IMR-90 (cell line): ENCODE measurements at regions of chr16 and their contacts with region 1.

Region 1: DNA sequence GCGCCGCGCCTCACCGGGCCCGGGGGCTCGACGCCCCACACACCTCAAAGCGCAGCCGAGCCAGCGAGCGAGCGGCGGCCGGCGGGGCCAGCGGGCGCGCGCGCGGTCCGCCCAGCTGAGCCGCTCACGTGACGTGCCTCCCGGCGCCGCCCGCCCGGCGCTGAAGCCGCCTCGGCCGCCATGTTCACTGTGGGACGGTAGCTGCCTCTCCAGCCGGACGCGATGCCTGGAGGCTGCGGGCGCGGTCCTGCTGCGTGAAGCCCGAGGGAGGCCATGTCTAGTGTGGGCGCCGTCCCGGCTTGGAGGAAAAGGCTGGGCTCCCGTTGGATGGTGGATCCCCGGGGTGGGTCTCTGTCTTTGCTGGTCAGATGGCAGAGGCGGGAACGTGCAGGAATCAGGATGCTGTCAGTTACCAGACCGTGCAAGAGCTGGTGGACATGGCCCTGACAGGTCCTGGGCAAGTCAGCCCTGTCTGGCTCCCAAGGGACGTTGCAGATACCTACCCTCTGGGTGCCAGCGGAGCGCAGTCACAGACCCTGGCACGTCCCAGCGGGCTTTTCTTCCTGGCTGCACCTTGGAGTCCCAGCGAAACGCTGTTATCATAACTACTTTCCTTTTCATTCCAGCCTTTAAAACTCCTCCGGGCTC is at the start of gene USP31:
- DNase-seq: peak; percentile 93
- ATAC-seq: peak; percentile 99
- H3K4me3 ChIP-seq: peak within 1 kb of the TSS; percentile 92
- H3K27ac ChIP-seq: peak within 1 kb of the TSS; percentile 18; the same call in 1 of the 2 replicates
- H3K4me1 ChIP-seq: peaks cover 5% of the 10 kb centered on the region; the same call in 1 of the 2 replicates
- H3K27me3 ChIP-seq: no peaks in the 10 kb centered on the region; the same call in 1 of the 2 replicates
- CTCF ChIP-seq: no peak
- POLR2A ChIP-seq: no peak
- RAD21 ChIP-seq: no peak
- total RNA-seq, gene USP31: 3.4 and 3.9 TPM in 2 replicates

Region 2: DNA sequence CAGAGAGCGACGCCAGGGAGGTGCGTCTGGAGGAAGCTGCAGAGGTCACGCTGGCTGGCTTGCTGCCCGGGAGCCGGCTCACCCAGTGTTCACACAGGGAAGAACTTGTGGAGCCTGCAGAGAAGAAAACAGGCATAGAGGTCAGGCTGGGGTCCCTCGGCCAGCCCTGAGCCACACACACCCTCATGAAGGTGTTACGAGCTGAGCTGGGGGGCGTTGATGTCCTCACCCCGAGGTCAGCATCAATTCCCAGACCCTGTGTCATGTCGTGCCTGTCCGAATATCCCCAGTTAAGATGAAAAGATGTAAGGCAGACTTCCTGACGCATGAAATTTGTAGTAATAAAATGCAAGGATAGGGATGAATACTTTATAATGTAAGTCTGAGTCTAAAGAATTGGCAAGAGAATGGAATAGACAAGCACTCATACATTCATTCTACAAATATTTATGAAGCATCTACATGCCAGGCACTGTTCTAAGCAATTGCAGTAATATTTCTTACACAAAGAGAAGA is 77.3 kb before region 1 on chr16:
- CTCF ChIA-PET with region 1: no interaction called
- POLR2A ChIA-PET with region 1: no interaction called
- dilution Hi-C with region 1: no loop called
- in situ Hi-C with region 1: no loop called
- intact Hi-C with region 1: loop called (anchors 5 kb)
- DNase-seq: peak; percentile 77
- ATAC-seq: peak; percentile 90
- H3K4me3 ChIP-seq: no peak overlapping the region
- H3K27ac ChIP-seq: no peak overlapping the region
- H3K4me1 ChIP-seq: peaks cover 6% of the 10 kb centered on the region
- H3K27me3 ChIP-seq: no peaks in the 10 kb centered on the region
- CTCF ChIP-seq: no peak
- POLR2A ChIP-seq: no peak
- RAD21 ChIP-seq: no peak